Left colon (tissue), 2 donors: ENCODE measurements at regions of chr16 and their contacts with region 1.

Region 1: DNA sequence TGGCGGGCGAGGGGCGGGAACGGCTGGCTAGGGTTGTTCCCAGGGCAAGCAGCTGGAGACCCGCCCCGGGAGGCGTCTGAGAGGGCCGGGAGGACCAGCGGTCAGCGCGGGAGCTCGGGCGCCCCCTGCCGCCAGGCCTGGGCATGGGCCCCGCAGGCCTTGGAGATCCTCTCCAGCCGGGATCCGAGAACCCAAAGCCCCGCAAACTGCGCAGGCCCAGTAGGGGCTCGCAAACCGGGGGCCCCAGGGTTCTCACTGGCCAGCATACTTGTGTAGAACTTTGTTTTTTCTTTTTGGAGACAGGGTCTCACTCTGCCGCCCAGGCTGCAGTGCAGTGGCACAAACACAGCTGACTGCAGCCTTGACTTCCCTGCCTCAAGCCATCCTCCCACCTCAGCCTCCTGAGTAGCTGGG is 20.8 kb upstream of the ZNF423 start:
- DNase-seq: peak; percentile 85 to 86
- ATAC-seq: peak; percentile 82

Region 2: DNA sequence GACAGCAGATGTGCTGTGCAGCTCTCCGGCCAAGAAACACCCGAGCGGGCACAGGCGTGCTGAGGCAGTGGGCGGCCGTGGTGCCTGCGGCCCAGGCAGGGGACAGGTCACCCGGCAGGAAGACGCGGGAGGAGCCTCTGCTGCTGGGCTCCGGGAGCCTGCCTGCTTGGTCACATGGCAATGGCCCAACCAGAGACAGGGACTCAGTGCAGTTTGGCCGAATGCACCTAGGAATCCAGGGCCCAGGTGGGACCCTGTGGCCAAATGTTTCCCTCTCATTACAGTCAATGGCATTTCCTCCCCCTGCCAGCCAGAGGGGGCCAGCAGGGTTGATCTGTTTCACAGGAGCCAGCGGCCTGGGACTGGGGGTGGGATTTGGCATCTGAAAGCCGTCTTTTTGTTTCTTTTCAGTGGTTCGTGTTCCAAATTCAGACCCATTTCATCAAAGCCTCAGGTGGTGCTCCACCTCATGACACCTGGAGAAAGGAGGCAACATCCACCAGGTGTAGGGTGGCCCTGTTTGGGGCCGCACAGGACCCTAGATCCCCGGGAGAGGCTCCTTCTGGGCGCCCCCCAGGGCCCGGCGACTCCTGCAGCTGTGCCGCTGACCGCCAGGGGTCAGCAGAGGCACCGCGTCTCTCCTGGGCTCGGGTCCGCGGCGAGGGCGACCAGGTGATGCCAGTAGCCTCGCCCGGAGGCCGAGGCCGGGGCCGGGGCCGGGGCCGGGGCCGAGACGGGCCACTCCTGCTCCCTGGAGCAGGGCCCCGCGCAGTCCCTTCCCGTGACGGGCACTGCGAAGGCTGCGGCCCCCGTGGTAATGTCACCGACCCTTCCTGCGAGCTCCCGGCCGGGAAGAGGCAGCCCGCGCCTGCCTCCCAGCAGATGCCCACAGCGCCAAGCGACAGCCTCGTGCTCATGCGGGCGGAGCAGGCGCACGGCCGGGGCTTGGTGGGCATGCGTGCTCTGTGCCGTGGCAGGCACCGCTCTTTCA is 384.7 kb before region 1 on chr16:
- intact Hi-C with region 1: loop called in 1 of 2 experiments (anchors 10 kb)
- DNase-seq: peak in 1 of 2 donors; percentile 40
- ATAC-seq: peak; percentile 74

Region 3: GRCh38 chr16:49617016-49617629 is 259.6 kb before region 1 on chr16:
- intact Hi-C with region 1: loop called in 1 of 2 experiments (anchors 10 kb)
- DNase-seq: no peak
- ATAC-seq: no peak